GM12878 (cell line): ENCODE measurements at regions of chr11 and their contacts with region 1.

Region 1: GRCh38 chr11:73478738-73479347 is 102.6 kb downstream of the RELT start:
- DNase-seq: no peak
- ATAC-seq: peak; percentile 68
- H3K4me3 ChIP-seq: no peak overlapping the region
- H3K27ac ChIP-seq: no peak overlapping the region
- H3K4me1 ChIP-seq: no peaks in the 10 kb centered on the region
- H3K27me3 ChIP-seq: no peaks in the 10 kb centered on the region
- CTCF ChIP-seq: peak; percentile 52 to 76 (median 67)
- EP300 ChIP-seq: no peak
- POLR2A ChIP-seq: no peak
- RAD21 ChIP-seq: 0 out of 2 replicates have a peak, but pooled peaks have one; percentile 18

Region 2: DNA sequence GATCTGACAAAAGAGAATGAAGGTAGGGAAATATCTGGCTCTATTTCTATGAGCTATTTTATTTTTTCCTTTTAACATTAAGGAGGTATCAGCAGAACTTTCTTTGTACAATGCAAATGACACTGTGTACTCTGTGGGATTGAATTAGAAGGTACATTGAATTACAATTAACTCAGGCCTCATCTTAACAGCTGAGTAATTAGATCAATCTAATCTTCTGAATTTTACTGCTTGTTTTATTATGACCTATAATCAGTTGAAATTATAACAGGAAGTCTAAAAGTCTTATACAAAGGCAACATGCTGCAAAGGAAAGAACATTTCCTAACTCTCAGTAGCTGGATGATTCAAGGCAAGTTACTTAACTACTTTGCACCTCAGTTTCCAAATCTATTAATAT is 32.9 kb before region 1 on chr11:
- CTCF ChIA-PET with region 1: interaction called, 20 read pairs
- POLR2A ChIA-PET with region 1: interaction called, 6 read pairs
- RAD21 ChIA-PET with region 1: no interaction called
- SMC1A ChIA-PET with region 1: interaction called, 6 read pairs
- in situ Hi-C with region 1: no loop called
- intact Hi-C with region 1: no loop called
- DNase-seq: no peak
- ATAC-seq: no peak
- H3K4me3 ChIP-seq: no peak overlapping the region
- H3K27ac ChIP-seq: no peak overlapping the region
- H3K4me1 ChIP-seq: no peaks in the 10 kb centered on the region
- H3K27me3 ChIP-seq: no peaks in the 10 kb centered on the region
- CTCF ChIP-seq: no peak
- EP300 ChIP-seq: no peak
- POLR2A ChIP-seq: no peak
- RAD21 ChIP-seq: no peak

Region 3: GRCh38 chr11:73493956-73494598 is 15.2 kb after region 1 on chr11:
- CTCF ChIA-PET with region 1: interaction called, 20 read pairs
- POLR2A ChIA-PET with region 1: no interaction called
- RAD21 ChIA-PET with region 1: interaction called, 6 read pairs
- SMC1A ChIA-PET with region 1: interaction called, 5 read pairs
- in situ Hi-C with region 1: no loop called
- intact Hi-C with region 1: no loop called
- DNase-seq: no peak
- ATAC-seq: no peak
- H3K4me3 ChIP-seq: no peak overlapping the region
- H3K27ac ChIP-seq: no peak overlapping the region
- H3K4me1 ChIP-seq: no peaks in the 10 kb centered on the region
- H3K27me3 ChIP-seq: no peaks in the 10 kb centered on the region
- CTCF ChIP-seq: no peak
- EP300 ChIP-seq: no peak
- POLR2A ChIP-seq: no peak
- RAD21 ChIP-seq: no peak

Region 4: DNA sequence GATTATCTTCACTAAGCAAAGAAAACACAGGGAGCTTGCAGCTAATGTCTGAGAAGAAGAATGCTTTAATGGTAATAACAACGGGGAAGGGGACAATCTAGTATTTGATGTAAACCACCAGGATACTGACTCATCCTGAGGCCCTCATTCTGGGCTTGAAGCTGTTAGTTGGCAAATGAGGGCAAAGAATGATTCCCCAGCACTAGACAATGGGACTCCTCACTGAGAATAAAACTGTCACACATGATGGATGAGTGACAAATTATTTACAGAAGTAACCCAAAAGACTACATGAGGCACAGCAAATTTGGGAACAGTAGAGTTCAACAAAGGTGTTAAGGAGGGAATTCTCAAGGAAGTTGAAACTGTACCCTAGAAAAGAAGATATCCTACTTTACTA is 42.8 kb after region 1 on chr11:
- CTCF ChIA-PET with region 1: interaction called, 11 read pairs
- POLR2A ChIA-PET with region 1: no interaction called
- RAD21 ChIA-PET with region 1: interaction called, 4 read pairs
- SMC1A ChIA-PET with region 1: interaction called, 5 read pairs
- in situ Hi-C with region 1: no loop called
- intact Hi-C with region 1: no loop called
- DNase-seq: peak; percentile 53
- ATAC-seq: peak; percentile 84
- H3K4me3 ChIP-seq: no peak overlapping the region
- H3K27ac ChIP-seq: peak overlapping the region; percentile 64
- H3K4me1 ChIP-seq: peaks cover 17% of the 10 kb centered on the region
- H3K27me3 ChIP-seq: no peaks in the 10 kb centered on the region
- CTCF ChIP-seq: no peak
- EP300 ChIP-seq: 0 out of 4 replicates have a peak, but pooled peaks of 1 of the 2 experiments have one; percentile 20
- POLR2A ChIP-seq: no peak
- RAD21 ChIP-seq: no peak

Region 5: DNA sequence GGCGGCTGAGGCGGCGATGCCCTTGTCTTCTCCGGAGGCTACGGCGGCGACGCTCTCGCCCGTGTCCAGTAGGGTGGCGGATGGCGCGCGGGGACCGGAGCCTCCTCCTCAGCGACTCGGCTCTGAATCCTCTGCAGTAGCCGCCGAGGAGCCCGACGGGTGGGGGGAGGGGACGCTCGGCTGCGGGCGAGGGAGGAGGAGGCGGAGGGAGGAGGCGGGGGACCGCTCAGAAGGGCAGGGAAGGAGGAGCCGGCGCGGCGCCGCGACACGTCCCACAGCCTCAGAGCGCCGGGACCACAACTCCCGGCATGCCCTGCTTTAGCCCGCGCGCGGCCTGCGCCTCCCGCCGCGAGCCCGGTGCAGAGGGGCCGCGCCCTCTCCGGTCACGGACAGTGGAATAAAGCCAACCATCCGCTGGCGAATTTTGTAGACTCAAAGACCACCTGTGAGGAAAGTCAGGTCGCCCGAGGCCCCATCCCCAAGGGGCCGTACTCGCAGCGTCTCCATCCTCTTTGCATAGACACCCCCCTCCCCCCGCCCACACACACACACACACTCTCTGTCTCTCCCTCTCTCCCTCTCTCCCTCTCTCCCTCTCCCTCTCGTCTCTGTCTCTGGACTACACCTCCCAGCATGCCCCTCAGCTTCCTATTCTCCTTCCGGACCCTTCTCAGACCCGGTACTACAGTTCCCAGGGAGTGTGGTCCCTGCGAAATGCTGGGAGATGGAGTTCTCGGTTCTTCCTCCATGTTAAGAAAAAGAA is 119.3 kb after region 1 on chr11 and contains the start of gene FAM168A:
- CTCF ChIA-PET with region 1: interaction called, 15 read pairs
- POLR2A ChIA-PET with region 1: no interaction called
- RAD21 ChIA-PET with region 1: interaction called, 5 read pairs
- SMC1A ChIA-PET with region 1: interaction called, 9 read pairs
- in situ Hi-C with region 1: no loop called
- intact Hi-C with region 1: no loop called
- DNase-seq: peak; percentile 86
- ATAC-seq: peak; percentile 96
- H3K4me3 ChIP-seq: peak within 1 kb of the TSS; percentile 77
- H3K27ac ChIP-seq: peak within 1 kb of the TSS; percentile 50
- H3K4me1 ChIP-seq: no peaks in the 10 kb centered on the region
- H3K27me3 ChIP-seq: no peaks in the 10 kb centered on the region
- CTCF ChIP-seq: peak in 2 of 3 experiments; percentile 11 to 26; a peak in 2 of 6 replicates
- EP300 ChIP-seq: no peak
- POLR2A ChIP-seq: peak; percentile 71
- RAD21 ChIP-seq: peak; percentile 8; the same call in 1 of the 2 replicates
- polyA plus RNA-seq, gene FAM168A: 1.7 to 1.8 TPM

Region 6: DNA sequence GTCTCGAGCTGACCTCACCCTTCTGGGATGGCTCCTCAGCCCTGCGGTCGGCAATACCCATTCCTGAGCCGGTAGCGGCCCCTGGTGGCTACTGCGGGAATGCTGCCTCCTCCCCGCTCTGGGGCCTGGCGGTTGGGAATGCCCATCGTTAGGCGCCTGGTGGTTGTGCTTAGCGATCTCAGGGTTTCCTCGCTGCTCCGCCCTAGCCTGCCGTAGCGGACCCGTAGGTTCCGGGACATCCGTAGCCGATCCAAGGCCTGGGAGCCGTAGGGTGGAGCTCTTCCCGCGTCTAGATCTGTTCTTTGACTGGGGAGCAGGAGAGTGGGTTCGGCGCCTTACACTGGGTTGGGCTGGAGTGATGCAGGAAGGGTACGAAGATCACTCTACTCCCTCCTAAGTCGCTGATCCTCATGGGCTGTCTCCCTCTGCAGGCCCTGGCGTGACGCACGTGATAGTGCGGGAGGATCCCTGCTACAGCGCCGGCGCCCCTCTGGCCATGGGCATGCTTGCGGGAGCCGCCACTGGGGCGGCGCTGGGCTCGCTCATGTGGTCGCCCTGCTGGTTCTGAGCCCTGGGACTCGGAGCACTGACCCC is 182.3 kb after region 1 on chr11:
- CTCF ChIA-PET with region 1: interaction called, 47 read pairs
- POLR2A ChIA-PET with region 1: no interaction called
- RAD21 ChIA-PET with region 1: interaction called, 25 read pairs
- SMC1A ChIA-PET with region 1: interaction called, 43 read pairs
- in situ Hi-C with region 1: no loop called
- intact Hi-C with region 1: loop called (anchors 2 kb)
- DNase-seq: peak; percentile 37
- ATAC-seq: peak; percentile 98
- H3K4me3 ChIP-seq: no peak overlapping the region; the same call in 1 of the 2 replicates
- H3K27ac ChIP-seq: no peak overlapping the region
- H3K4me1 ChIP-seq: no peaks in the 10 kb centered on the region
- H3K27me3 ChIP-seq: no peaks in the 10 kb centered on the region
- CTCF ChIP-seq: peak; percentile 96 to 99 (median 98)
- EP300 ChIP-seq: no peak
- POLR2A ChIP-seq: no peak
- RAD21 ChIP-seq: peak; percentile 98